ENCODE measurements at regions of chr4 and their contacts with region 1.

Region 1: GRCh38 chr4:169523796-169524195 is 88.6 kb downstream of the NEK1 start:
- DNase-seq: no peak
- H3K4me3 ChIP-seq: no peak overlapping the region
- H3K27me3 ChIP-seq: no peaks in the 10 kb centered on the region
- CTCF ChIP-seq: no peak

Region 2: GRCh38 chr4:168449719-168450452 is 1073.9 kb before region 1 on chr4:
- CTCF ChIA-PET with region 1: no interaction called
- POLR2A ChIA-PET with region 1: interaction called, 12 read pairs
- DNase-seq: peak; percentile 63
- H3K4me3 ChIP-seq: no peak overlapping the region
- H3K27me3 ChIP-seq: no peaks in the 10 kb centered on the region
- CTCF ChIP-seq: no peak